Activated naive CD4-positive, alpha-beta T cell treated with anti-CD3 and anti-CD28 coated beads for 36 hours (primary cell): ENCODE measurements at regions of chr22 and their contacts with region 1.

Region 1: DNA sequence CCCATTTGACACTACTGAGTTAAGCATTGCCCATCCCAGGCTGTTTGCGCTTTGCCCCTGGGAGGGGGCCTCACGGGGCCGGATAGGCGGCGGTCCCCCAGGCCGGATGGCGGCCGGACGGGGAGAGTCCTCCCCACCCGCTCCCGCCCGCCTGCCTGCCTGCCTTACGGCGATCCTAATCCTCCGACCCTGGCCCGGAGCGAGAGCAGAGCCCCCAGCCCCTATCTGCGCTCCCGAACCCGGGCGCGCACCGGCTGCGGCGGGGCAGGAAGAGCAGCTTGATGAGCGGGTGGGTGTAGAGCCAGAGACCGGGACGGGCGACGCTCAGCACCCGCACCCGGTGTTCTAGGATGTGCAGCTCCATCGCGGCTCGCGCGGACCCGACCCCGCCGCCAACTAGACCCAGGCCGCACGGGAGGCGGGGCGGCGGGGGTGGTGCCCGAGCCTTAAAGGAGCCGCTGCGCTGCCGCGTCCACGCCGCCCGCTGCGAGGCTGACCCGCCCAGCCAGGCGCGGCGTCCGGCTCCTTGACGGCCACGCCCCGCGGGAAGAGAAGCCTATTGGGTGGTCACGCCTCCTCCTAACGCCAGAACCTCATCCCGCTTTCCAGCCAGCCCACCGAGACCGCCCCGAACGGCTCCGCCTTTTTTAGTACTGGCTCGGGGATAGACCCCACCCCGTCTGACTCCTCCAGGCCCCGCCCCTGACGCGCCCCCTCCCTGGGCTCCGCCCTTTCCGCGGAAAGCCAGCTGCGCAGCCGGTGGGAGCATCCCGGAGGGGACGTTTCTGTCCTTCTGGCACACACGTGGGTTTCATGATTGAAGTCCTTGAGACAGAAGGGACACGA is at the start of gene CASTOR1:
- DNase-seq: peak; percentile 93
- H3K4me3 Mint-ChIP-seq: peak within 1 kb of the TSS; percentile 77
- H3K27ac Mint-ChIP-seq: peak within 1 kb of the TSS; percentile 8
- H3K4me1 Mint-ChIP-seq: peaks cover 31% of the 10 kb centered on the region
- H3K27me3 Mint-ChIP-seq: no peaks in the 10 kb centered on the region
- total RNA-seq, gene CASTOR1: 2.1 to 3.8 TPM

Region 2: DNA sequence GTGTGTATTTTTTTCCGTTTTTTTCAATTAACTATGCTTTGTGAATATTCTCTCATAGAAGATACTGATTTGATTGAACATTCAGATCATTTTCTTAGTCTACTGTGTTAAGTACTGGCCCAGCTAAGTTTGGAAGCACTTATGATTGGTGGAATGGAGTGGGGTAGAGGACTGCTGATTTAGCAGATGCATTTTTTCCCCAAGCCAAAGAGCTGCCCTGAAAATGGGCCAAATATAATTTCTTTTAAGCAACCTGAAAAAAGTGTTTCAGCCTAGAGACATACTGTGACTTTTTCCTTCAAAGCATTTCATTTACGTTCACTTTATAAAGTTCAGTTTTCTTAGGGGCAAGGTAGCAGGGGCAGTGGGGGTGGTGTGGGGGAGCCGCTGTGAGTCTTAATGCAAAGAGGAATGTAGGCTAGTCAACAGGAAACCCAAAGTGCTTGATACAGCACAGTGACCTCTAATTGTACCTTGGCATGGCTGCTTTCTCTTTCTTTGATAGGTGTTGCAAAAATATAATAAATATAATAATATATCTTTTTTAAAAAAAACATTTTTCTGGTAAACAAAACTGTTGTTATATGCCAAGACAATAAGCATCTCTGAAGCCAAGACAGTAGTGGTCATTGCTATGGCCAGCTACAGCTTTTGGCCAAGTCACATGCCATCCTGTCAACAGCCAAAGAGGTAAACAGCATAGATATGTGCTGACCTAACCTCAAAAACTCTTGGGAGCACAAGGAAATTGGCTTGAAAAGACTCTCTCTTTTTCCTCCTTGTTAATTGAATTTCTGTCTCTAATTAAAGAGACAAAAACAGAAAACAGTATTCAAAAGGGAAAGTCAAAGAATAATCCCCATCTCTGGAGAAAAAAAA is 101.6 kb before region 1 on chr22:
- CTCF ChIA-PET with region 1: no interaction called
- intact Hi-C with region 1: no loop called
- DNase-seq: no peak
- H3K4me3 Mint-ChIP-seq: no peak overlapping the region
- H3K27ac Mint-ChIP-seq: peak overlapping the region; percentile 71
- H3K4me1 Mint-ChIP-seq: peaks cover 87% of the 10 kb centered on the region
- H3K27me3 Mint-ChIP-seq: no peaks in the 10 kb centered on the region

Region 3: DNA sequence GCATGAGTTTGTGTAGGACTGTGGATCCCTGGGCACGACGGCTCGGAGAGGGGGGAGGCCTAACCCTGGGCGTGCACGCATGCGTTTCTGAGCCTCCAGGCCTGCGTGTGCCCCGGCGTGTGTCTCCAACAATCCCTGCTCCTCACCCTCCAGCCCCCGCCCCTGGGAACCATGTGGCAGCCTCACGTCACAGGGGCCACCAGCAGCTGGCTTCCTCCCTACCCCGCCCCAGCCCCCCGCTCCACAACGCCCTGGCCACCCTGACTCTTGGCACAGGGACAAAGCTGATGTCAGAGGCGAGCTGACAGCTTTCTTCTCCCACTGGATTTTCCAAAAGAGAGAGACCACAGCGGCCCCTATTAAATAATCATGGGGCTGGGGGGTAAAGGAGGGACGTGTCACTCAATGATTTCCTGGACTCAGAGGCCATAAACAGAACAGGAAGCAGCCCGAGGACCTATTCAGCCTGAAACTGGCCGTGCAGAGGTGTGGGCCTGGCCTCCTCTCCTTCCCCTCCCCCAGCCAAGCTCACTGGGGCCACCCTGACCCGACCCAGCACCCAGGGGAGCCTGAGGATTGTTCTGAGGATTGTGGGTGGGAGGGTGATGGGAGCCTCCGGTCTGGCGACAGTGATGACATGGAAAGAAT is 36.0 kb before region 1 on chr22:
- CTCF ChIA-PET with region 1: interaction called, 21 read pairs
- intact Hi-C with region 1: loop called (anchors 1 kb)
- DNase-seq: no peak
- H3K4me3 Mint-ChIP-seq: no peak overlapping the region
- H3K27ac Mint-ChIP-seq: no peak overlapping the region
- H3K4me1 Mint-ChIP-seq: peaks cover 34% of the 10 kb centered on the region
- H3K27me3 Mint-ChIP-seq: no peaks in the 10 kb centered on the region

Region 4: DNA sequence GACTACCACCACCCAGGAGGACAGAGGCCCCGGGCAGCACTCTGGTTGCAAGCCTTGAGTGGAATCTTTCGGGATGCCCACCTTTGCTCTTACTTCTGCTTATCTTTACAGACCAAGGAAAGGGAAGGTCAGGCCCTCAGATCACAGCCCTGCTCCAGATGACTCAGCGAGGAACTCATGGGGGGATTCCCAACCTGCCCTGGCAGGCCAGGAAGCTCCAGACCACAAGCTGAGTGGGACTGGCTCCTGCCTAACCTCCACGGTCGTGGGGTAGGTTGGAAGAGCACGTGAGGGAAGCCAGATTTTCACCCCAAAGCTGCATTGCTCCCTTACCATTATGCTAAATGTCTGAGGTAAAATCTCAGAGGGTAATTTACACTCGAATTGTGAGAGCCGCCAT is 25.6 kb after region 1 on chr22:
- CTCF ChIA-PET with region 1: interaction called, 30 read pairs
- intact Hi-C with region 1: no loop called
- DNase-seq: peak; percentile 76
- H3K4me3 Mint-ChIP-seq: no peak overlapping the region
- H3K27ac Mint-ChIP-seq: peak overlapping the region; percentile 85
- H3K4me1 Mint-ChIP-seq: peaks cover 93% of the 10 kb centered on the region
- H3K27me3 Mint-ChIP-seq: no peaks in the 10 kb centered on the region

Region 5: GRCh38 chr22:30348809-30349208 is 59.5 kb after region 1 on chr22:
- CTCF ChIA-PET with region 1: interaction called, 12 read pairs
- intact Hi-C with region 1: no loop called
- DNase-seq: peak; percentile 29
- H3K4me3 Mint-ChIP-seq: peak overlapping the region; percentile 4
- H3K27ac Mint-ChIP-seq: peak overlapping the region; percentile 90
- H3K4me1 Mint-ChIP-seq: peaks cover 79% of the 10 kb centered on the region
- H3K27me3 Mint-ChIP-seq: no peaks in the 10 kb centered on the region

Region 6: DNA sequence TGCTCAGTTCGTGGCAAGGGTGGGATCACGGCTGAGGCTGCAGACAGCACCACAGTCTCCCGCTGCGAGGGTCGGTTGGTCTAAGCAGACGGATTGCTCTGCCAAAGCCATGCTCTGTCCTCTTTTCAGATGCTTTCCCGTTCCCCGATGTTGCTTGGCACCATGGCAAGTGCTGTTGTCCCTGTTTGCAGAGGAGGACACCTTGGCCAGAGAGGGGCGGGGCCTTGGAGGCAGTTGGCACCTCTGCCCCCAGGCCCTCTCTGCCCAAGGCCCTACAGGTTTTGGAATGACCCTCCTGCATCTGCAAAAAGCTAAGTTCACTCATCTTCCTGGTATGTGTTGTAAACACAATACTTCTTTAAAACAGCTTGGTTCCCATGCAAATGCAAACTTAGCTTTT is 79.1 kb after region 1 on chr22:
- CTCF ChIA-PET with region 1: interaction called, 22 read pairs
- intact Hi-C with region 1: no loop called
- DNase-seq: no peak
- H3K4me3 Mint-ChIP-seq: no peak overlapping the region
- H3K27ac Mint-ChIP-seq: no peak overlapping the region
- H3K4me1 Mint-ChIP-seq: no peaks in the 10 kb centered on the region
- H3K27me3 Mint-ChIP-seq: no peaks in the 10 kb centered on the region

Region 7: DNA sequence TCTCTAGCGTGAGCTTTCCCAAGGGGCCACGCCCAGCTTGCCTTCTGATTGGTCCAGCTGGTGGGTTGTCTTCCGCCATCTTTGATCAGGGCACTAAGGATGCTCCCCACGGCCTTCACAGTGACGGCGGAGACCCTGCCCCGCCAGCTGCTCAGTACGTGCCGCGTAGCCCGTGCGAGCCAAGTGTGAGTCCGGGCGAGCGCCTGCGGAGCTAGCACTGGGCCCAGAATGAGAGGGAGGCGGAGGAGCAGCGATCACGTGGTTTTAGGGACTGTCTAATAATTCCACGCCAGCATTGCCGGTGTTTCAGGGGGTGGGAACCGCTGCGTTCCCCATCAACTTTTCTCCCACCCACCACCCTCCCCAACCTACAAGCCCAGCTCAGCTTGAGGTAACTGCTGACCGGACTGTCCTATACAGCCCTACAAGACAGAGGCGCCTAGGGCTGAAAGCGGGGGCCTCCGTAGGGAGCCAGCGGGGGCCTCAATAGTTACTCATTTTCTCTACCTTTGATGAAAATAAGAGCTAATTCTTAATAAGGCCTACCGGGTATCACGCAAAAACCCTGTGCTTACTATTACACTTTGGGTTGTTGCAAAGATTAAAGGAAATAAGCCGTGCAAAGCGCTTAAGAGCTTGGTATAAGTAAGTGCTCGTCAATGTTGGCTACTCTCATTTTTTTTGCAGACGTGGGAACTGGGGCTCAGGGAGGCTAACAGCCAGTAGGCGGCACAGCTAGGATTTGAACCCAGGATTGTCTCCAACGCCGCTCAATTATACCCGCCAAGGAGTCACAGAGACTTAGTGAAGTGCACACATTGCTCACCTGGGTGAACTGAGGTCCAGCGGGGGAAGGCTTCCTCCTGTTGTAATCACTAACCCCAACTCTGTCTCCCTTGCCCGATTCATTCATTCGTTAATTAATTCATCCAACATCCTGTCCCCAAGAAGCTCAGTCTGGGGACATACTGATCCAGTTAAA is 134.9 kb after region 1 on chr22:
- CTCF ChIA-PET with region 1: interaction called, 14 read pairs
- intact Hi-C with region 1: loop called (anchors 1 kb)
- DNase-seq: peak; percentile 99
- H3K4me3 Mint-ChIP-seq: peak overlapping the region; percentile 97
- H3K27ac Mint-ChIP-seq: peak overlapping the region; percentile 96
- H3K4me1 Mint-ChIP-seq: peaks cover 50% of the 10 kb centered on the region
- H3K27me3 Mint-ChIP-seq: no peaks in the 10 kb centered on the region